ENCODE measurements at regions of chr14 and their contacts with region 1.

Region 1: DNA sequence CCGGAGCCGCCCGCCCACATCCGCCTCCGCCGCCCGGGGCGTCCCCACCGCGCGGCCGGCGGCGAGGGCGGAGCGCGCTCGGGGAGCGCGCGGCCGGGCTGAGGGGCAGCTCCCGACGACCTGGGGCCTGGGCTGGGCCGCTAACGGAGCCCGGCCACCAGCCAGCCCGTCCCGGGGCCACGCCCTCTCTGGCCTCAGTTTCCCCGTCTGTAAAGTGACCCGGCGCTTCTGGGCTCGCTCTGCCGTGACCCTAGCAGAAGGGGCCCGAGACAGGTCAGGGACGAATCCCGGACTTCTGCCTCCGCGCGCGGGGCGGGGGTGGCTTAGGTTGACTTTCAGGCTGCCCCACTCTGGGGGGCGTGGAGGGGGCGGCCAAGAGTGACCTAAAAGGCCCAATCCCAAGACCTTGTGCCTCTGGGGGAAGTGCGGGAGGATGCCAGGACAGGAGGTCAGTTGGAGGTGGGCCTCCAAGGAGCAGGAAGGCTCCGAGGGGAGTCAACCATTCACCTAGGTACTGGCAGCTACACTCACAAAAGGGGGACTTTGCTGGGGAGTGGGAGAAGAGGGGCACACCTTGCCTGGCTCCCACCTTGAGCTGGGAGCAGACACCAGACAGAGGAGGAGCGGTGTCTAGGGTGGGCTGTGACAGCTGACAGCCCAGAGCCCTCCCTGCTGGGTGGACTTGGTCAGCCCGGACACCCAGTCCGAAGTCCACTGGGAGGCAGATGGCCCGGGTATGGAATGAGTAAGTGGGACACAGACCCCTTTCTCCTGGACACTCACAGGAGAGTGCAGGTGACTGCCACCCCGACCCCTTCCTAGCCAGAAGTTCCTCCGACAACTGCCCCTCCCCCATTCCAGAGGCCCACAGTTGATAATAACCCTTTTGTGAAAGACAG is 489 bp upstream of the AKT1 start:
- DNase-seq: no peak
- H3K4me3 ChIP-seq: peak overlapping the region; percentile 49 to 55
- H3K27ac ChIP-seq: peak overlapping the region; percentile 92
- H3K4me1 ChIP-seq: peaks cover 41% of the 10 kb centered on the region
- H3K27me3 ChIP-seq: no peaks in the 10 kb centered on the region
- CTCF ChIP-seq: no peak
- POLR2A ChIP-seq: peak in 1 of 2 donors; percentile 85

Region 2: GRCh38 chr14:104349950-104350349 is 446.1 kb before region 1 on chr14:
- intact Hi-C with region 1: loop called (anchors 5 kb)
- DNase-seq: no peak
- H3K4me3 ChIP-seq: no peak overlapping the region
- H3K27ac ChIP-seq: no peak overlapping the region
- H3K4me1 ChIP-seq: no peaks in the 10 kb centered on the region
- H3K27me3 ChIP-seq: no peaks in the 10 kb centered on the region
- CTCF ChIP-seq: no peak
- POLR2A ChIP-seq: no peak

Region 3: DNA sequence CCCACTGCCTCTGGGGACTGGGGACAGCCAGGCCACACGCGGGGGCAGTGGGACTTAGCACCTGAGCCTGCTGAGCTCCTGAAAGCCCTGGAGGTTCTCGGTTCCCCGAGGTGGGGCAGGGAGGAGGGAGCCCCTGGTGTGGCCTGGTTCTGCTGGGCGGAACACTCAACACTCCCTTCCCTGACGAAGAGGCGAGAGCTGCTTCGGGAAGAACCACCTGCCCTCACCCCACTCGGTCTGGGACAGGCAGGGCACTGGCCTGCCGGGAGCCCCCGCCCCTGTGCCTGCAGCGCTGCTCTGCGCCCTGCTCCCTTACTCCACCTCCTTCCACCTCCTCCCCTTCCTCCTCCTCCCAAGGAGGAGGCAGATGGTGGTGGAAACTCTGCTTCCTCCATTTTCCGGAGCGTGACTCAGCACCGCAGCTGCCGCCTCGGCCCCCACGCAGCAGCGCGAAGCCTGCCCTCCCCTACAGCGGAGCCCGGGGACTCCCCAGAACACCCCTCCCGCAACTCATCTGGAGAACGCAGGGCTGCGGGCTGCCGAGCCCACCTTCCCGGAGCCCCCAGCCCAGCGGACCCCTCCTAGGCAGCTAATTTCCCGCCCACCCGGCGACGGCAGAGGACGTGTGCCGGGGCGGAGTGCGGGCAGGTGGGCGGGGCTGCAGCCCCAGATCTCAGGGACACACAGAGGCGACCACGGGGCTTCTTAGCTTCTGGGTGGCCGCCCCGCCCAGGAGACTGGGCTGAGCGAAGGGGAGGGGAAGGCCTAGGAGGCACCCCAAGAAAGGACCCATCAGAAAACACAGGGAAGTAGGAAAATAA is 118.3 kb before region 1 on chr14:
- intact Hi-C with region 1: no loop called
- DNase-seq: no peak
- H3K4me3 ChIP-seq: peak overlapping the region; percentile 45 to 61
- H3K27ac ChIP-seq: peak overlapping the region; percentile 86
- H3K4me1 ChIP-seq: peaks cover 59% of the 10 kb centered on the region
- H3K27me3 ChIP-seq: no peaks in the 10 kb centered on the region
- CTCF ChIP-seq: no peak
- POLR2A ChIP-seq: peak in 1 of 2 donors; percentile 37

Region 4: GRCh38 chr14:104826189-104826860 is 30.3 kb after region 1 on chr14:
- intact Hi-C with region 1: loop called (anchors 2 kb)
- DNase-seq: no peak
- H3K4me3 ChIP-seq: peak overlapping the region; percentile 59 to 89
- H3K27ac ChIP-seq: peak overlapping the region; percentile 73
- H3K4me1 ChIP-seq: peaks cover 27% of the 10 kb centered on the region
- H3K27me3 ChIP-seq: no peaks in the 10 kb centered on the region
- CTCF ChIP-seq: peak; percentile 49 to 85 (median 72)
- POLR2A ChIP-seq: no peak

Region 5: GRCh38 chr14:104985675-104986525 is 189.9 kb after region 1 on chr14 and contains the start of gene CLBA1:
- intact Hi-C with region 1: loop called (anchors 10 kb)
- DNase-seq: no peak
- H3K4me3 ChIP-seq: peak within 1 kb of the TSS; percentile 75 to 84
- H3K27ac ChIP-seq: peak within 1 kb of the TSS; percentile 68
- H3K4me1 ChIP-seq: peaks cover 20% of the 10 kb centered on the region
- H3K27me3 ChIP-seq: no peaks in the 10 kb centered on the region
- CTCF ChIP-seq: no peak
- POLR2A ChIP-seq: peak in 1 of 2 donors; percentile 18
- total RNA-seq, gene CLBA1: 4.7 TPM

Measured in vagina (tissue), 2 donors.